Activated CD4-positive, alpha-beta memory T cell treated with anti-CD3 and anti-CD28 coated beads, Interleukin-2, amount 10 ng/mL, durations not matched to agents 7 days and 5 days (primary cell): ENCODE measurements at regions of chr7 and their contacts with region 1.

Region 1: GRCh38 chr7:101217388-101218235 is at the starts of genes PLOD3 and ZNHIT1:
- DNase-seq: peak; percentile 97
- H3K4me3 Mint-ChIP-seq: peak within 1 kb of the TSS; percentile 96
- H3K27ac Mint-ChIP-seq: peak within 1 kb of the TSS; percentile 87
- H3K4me1 Mint-ChIP-seq: peaks cover 35% of the 10 kb centered on the region
- H3K27me3 Mint-ChIP-seq: no peaks in the 10 kb centered on the region
- total RNA-seq, gene PLOD3: 63.3 to 66.6 TPM
- total RNA-seq, gene ZNHIT1: 59.9 to 60.5 TPM

Region 2: DNA sequence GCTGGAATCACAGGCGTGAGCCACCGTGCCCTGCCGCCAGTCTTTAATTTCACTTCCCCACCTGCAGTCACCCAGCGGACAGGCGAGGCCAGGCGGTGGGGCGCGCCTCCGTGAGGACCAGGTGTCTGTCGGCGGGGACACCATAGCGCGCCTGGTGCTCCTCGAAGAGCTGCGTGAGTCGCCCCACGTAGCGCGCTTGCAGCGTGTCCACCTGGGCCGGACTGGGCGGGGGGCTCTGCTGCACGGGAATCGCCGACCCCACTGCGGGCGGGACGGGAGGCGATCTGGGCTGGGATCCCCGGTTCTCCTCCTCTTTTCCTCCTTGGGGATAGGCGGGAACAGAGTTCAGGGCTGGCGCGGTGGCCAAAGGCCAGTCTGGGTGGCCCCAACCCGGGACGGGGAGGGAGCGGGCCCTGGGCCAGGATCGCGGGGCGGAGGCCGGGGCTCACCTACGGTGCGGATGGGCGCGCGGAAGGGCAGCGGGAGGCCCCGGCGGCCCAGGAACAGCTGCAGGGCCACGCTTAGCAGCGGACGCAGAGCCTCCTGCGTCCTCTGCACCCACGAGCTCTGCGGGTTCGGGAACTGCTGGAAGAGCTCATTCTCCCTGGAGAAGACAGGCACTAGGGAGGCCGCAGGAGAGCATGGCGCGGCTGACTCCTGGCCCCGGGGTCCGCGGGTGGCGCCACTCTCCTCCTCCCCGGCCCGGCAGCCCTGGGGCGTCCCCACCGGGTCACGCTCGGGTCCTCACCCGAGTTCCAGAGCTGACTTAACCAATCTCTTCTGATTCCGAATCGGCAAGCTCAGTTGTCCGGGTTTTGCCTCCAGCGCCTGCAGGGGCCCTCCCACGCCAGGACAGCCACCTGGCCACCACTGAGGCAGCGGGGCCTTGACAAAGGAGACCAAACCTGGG is 15.7 kb before region 1 on chr7:
- CTCF ChIA-PET with region 1: interaction called, 5 read pairs
- POLR2A ChIA-PET with region 1: interaction called, 18 read pairs
- DNase-seq: no peak
- H3K4me3 Mint-ChIP-seq: no peak overlapping the region
- H3K27ac Mint-ChIP-seq: no peak overlapping the region
- H3K4me1 Mint-ChIP-seq: peaks cover 17% of the 10 kb centered on the region
- H3K27me3 Mint-ChIP-seq: peaks cover 29% of the 10 kb centered on the region

Region 3: DNA sequence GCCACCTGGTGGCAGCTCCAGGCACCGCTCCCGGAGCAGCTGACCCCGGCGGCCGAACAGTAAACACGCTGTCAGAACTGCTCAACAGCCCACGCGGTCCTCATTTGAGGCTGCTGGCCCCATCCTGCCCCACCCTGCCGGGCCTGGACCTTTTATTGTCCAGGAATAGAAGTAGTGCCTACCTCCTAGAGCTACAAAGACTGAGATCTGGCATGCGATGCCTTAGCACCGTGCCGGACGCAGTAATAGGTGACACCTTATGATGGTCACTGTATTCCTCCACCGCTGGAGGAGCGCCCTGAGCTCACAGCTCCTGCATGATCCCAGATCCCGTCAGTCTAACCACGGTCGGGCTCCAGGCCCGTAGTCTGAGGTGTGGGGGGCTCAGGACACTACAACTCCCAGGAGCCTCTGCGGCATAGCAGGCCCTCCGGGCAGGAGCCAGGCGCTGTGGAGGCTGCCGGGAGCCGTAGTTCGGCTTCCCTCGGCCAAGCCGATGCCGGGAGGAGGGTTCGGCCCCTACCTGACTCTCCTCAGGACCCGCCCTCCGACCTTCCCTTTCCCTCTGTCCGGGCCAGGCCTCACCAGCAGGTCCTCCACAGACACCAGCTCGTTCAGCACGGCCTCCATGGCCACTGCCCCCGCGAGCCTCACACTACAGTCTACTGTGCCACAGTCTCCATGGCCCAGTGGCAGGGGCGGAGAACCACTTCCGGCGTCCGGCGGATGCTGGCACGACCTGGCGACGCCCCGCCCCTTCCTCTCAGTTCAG is 26.9 kb after region 1 on chr7 and contains the start of gene FIS1:
- CTCF ChIA-PET with region 1: interaction called, 74 read pairs
- POLR2A ChIA-PET with region 1: interaction called, 61 read pairs
- DNase-seq: peak; percentile 94
- H3K4me3 Mint-ChIP-seq: peak within 1 kb of the TSS; percentile 96
- H3K27ac Mint-ChIP-seq: peak within 1 kb of the TSS; percentile 90
- H3K4me1 Mint-ChIP-seq: peaks cover 31% of the 10 kb centered on the region
- H3K27me3 Mint-ChIP-seq: no peaks in the 10 kb centered on the region
- total RNA-seq, gene FIS1: 94.5 to 97.6 TPM

Region 4: GRCh38 chr7:101251871-101252659 is 34.5 kb after region 1 on chr7:
- CTCF ChIA-PET with region 1: interaction called, 18 read pairs
- POLR2A ChIA-PET with region 1: interaction called, 28 read pairs
- DNase-seq: peak; percentile 99
- H3K4me3 Mint-ChIP-seq: peak overlapping the region; percentile 92
- H3K27ac Mint-ChIP-seq: peak overlapping the region; percentile 92
- H3K4me1 Mint-ChIP-seq: peaks cover 26% of the 10 kb centered on the region
- H3K27me3 Mint-ChIP-seq: peaks cover 2% of the 10 kb centered on the region

Region 5: DNA sequence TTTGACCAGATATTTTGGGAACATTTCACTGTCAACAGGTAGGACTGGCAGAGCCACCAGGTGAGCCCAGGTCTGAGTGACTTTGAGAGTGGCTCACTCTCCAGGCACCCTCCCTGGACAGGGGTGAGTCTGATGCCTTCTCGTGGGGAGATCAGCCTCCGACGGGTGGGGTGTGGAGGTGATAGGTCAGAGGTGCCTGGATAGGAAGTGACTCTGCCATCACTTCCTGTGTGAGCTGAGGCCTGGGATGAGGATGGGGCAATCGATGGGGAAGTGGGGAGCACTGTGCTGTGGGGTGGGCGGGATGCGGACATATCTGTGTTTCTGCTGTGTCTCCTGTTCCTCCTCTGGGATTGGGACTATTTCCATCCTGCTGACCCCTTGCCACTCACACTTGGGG is 69.4 kb after region 1 on chr7:
- CTCF ChIA-PET with region 1: interaction called, 15 read pairs
- POLR2A ChIA-PET with region 1: interaction called, 7 read pairs
- DNase-seq: no peak
- H3K4me3 Mint-ChIP-seq: no peak overlapping the region
- H3K27ac Mint-ChIP-seq: no peak overlapping the region
- H3K4me1 Mint-ChIP-seq: peaks cover 27% of the 10 kb centered on the region
- H3K27me3 Mint-ChIP-seq: peaks cover 12% of the 10 kb centered on the region